Head of caudate nucleus (tissue), 42 donors: ENCODE measurements at regions of chr15 and their contacts with region 1.

Region 1: GRCh38 chr15:98518823-98519561 is 129.3 kb upstream of the IGF1R start:
- DNase-seq: peak in 39 of 42 donors; percentile 13 to 86 (median 62)

Region 2: GRCh38 chr15:98292442-98293240 is 226.4 kb before region 1 on chr15:
- intact Hi-C with region 1: no loop called
- DNase-seq: peak in 41 of 42 donors; percentile 13 to 83 (median 56)

Region 3: GRCh38 chr15:98650001-98650826 is 131.2 kb after region 1 on chr15:
- intact Hi-C with region 1: loop called (anchors 5 kb)
- DNase-seq: peak in 31 of 42 donors; percentile 10 to 63 (median 31)

Region 4: DNA sequence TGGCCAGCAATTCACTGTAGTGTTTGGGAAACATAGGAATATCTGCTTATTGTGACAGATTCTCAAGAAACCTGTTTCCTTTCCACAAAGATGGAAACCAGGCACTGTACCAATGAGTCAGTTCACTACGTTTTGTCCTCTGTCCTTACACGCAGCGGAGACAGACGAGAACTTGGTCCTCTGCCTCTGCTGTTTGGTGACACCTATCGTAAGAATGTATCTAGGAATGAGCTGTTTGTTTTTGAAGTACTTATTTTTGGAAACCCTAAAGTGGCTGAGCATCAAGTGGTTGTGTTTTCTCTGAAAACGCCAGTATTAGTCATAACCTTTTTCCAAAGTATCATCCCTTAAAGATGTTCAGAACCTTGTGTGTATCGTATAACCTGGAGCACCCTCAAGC is 395.6 kb after region 1 on chr15:
- intact Hi-C with region 1: loop called (anchors 10 kb)
- DNase-seq: no peak

Region 5: GRCh38 chr15:99076552-99077308 is 557.7 kb after region 1 on chr15:
- intact Hi-C with region 1: loop called (anchors 10 kb)
- DNase-seq: peak in 40 of 42 donors; percentile 15 to 85 (median 53)